GM10248 (cell line): ENCODE measurements at regions of chr16 and their contacts with region 1.

Region 1: GRCh38 chr16:67470359-67470758 is 10.6 kb downstream of the ATP6V0D1 start:
- DNase-seq: no peak
- CTCF ChIP-seq: no peak

Region 2: DNA sequence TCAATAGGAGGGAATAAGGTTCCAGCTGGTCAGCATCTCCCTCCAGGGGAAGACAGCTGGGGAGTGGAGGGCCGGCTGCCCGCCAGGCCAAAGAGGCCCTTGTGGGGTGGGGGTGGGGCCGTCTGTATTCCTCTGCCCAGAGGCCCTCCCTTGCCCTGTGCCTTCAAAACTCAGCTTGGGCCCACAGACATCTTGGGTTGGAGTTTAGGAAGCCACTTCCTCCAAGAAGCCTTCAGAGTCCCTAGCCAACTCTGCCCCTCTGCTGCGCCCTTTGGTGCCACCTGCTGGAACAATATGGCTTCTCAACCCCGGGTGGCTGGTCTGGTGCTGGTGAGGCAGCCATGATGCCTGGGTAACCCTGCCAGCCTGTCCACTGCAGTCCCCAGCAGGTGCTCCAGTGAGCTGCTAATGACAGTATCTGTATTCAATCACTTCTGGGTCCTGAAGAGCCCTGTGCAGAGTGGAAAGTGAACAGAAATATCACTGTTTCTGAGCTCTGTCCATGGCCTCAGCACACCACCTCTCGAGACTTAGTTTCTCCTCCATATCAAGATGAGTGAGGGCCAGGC is 22.8 kb before region 1 on chr16:
- CTCF ChIA-PET with region 1: interaction called, 26 read pairs
- POLR2A ChIA-PET with region 1: no interaction called
- DNase-seq: peak; percentile 79
- CTCF ChIP-seq: peak; percentile 62

Region 3: DNA sequence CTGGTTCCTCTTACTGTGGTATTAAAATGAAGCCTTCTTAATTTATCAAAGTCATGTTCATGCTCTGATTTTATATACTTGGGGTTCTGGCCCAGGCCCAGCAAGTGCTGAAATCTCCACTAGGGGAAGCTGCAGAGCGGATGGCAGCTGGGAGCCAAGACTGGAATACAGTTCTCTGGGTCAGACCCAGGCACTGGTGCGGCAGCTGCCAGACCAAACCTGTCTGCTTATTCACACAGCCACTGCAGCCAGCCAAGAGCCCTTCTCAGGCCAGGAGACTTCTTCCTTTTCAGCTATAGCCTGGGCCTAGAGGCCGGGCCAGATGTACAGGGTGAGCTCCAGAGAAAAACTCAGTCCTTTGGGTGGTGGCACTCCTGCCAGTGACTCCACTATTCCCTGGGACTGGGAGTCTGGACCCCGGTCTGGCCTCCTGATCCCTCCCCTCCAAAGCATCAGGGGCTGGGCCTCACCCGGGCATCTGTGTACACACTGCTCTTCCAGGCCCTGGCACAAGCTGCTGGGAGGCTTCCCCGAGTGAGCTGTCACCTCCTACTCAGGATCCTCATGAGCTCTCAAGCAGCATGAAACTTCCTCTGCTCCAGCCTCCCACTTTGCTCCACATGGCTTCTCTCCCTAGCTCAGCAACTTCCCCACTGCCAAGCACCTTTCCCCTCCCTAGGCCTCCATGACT is 13.8 kb before region 1 on chr16:
- CTCF ChIA-PET with region 1: interaction called, 13 read pairs
- POLR2A ChIA-PET with region 1: no interaction called
- DNase-seq: peak; percentile 26
- CTCF ChIP-seq: no peak

Region 4: GRCh38 chr16:67480833-67481560 is 10.6 kb after region 1 on chr16 and contains the start of gene ATP6V0D1:
- CTCF ChIA-PET with region 1: interaction called, 56 read pairs
- POLR2A ChIA-PET with region 1: interaction called, 5 read pairs
- DNase-seq: peak; percentile 99
- CTCF ChIP-seq: peak; percentile 90

Region 5: GRCh38 chr16:67718668-67719047 is 248.3 kb after region 1 on chr16:
- CTCF ChIA-PET with region 1: no interaction called
- POLR2A ChIA-PET with region 1: no interaction called
- DNase-seq: no peak
- CTCF ChIP-seq: no peak